K562 (cell line): ENCODE measurements at regions of chr18 and their contacts with region 1.

Region 1: DNA sequence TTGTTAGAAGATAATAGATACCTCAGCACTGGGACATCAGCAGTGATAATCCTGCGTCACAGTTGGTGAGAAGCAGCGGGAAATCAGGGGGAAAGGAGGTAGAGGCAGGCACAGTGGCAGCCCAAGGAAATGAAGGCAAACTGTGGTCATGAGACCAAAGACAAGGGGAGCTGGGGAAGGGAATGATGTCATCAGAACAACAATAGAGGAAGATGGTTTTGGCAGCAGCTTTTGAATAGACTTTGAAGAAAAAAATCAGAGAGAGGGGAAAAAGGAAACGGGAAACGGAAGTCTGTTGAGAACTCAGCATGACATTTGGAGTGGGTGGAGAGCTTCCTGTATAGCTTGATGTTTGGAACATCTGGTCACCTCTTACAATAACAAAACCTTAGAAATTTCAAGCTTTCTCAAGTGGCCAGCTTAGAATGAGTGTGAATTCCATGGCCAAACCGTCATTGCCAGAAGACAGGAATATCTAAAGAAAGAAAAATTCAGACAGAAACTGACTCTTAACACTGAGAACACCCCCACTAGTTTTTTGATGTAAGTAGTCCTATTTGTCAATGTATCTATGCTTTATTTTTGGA is 18.4 kb upstream of the YES1 start:
- DNase-seq: peak; percentile 32 to 84 (median 46)
- ATAC-seq: peak; percentile 57
- H3K4me3 ChIP-seq: peak overlapping the region; percentile 41; the same call in 1 of the 2 replicates
- H3K27ac ChIP-seq: peak overlapping the region; percentile 75
- H3K4me1 ChIP-seq: peaks cover 21 to 39% of the 10 kb centered on the region in 2 experiments; a peak in 4 of 5 replicates
- H3K27me3 ChIP-seq: no peaks in the 10 kb centered on the region
- CTCF ChIP-seq: no peak
- EP300 ChIP-seq: peak; percentile 71; the same call in 1 of the 2 replicates
- POLR2A ChIP-seq: peak; percentile 51; the same call in 1 of the 2 replicates
- RAD21 ChIP-seq: no peak

Region 2: GRCh38 chr18:623761-624620 is 206.4 kb before region 1 on chr18:
- CTCF ChIA-PET with region 1: interaction called, 17 read pairs
- POLR2A ChIA-PET with region 1: interaction called, 3 read pairs
- in situ Hi-C with region 1: loop called (anchors 5 kb)
- intact Hi-C with region 1: loop called (anchors 1 kb)
- DNase-seq: peak; percentile 61 to 85 (median 64)
- ATAC-seq: peak; percentile 95
- H3K4me3 ChIP-seq: no peak overlapping the region
- H3K27ac ChIP-seq: no peak overlapping the region
- H3K4me1 ChIP-seq: peaks cover 3 to 4% of the 10 kb centered on the region in 2 experiments; a peak in 3 of 5 replicates
- H3K27me3 ChIP-seq: peaks cover 0 to 5% of the 10 kb centered on the region in 2 experiments; a peak in 2 of 5 replicates
- CTCF ChIP-seq: peak; percentile 78 to 85 (median 82)
- EP300 ChIP-seq: no peak
- POLR2A ChIP-seq: no peak
- RAD21 ChIP-seq: peak; percentile 70 to 81

Region 3: GRCh38 chr18:658001-658946 is 172.1 kb before region 1 on chr18:
- CTCF ChIA-PET with region 1: no interaction called
- POLR2A ChIA-PET with region 1: interaction called, 11 read pairs
- in situ Hi-C with region 1: no loop called
- intact Hi-C with region 1: no loop called
- DNase-seq: peak; percentile 83 to 98 (median 87)
- ATAC-seq: peak; percentile 89
- H3K4me3 ChIP-seq: peak overlapping the region; percentile 93
- H3K27ac ChIP-seq: peak overlapping the region; percentile 96
- H3K4me1 ChIP-seq: peaks cover 19 to 27% of the 10 kb centered on the region in 2 experiments; a peak in 4 of 5 replicates
- H3K27me3 ChIP-seq: no peaks in the 10 kb centered on the region
- CTCF ChIP-seq: no peak
- EP300 ChIP-seq: 0 out of 2 replicates have a peak, but pooled peaks have one; percentile 5
- POLR2A ChIP-seq: peak; percentile 95
- RAD21 ChIP-seq: no peak

Region 4: GRCh38 chr18:677951-678381 is 152.4 kb before region 1 on chr18:
- CTCF ChIA-PET with region 1: no interaction called
- POLR2A ChIA-PET with region 1: interaction called, 5 read pairs
- in situ Hi-C with region 1: no loop called
- intact Hi-C with region 1: loop called (anchors 5 kb)
- DNase-seq: peak in 1 of 4 experiments; percentile 27
- ATAC-seq: no peak
- H3K4me3 ChIP-seq: no peak overlapping the region
- H3K27ac ChIP-seq: no peak overlapping the region
- H3K4me1 ChIP-seq: peaks cover 0 to 7% of the 10 kb centered on the region in 2 experiments; a peak in 3 of 5 replicates
- H3K27me3 ChIP-seq: no peaks in the 10 kb centered on the region
- CTCF ChIP-seq: no peak
- EP300 ChIP-seq: no peak
- POLR2A ChIP-seq: 0 out of 2 replicates have a peak, but pooled peaks have one; percentile 36
- RAD21 ChIP-seq: no peak

Region 5: GRCh38 chr18:712401-713134 is 117.8 kb before region 1 on chr18 and contains the start of gene ENOSF1:
- CTCF ChIA-PET with region 1: no interaction called
- POLR2A ChIA-PET with region 1: interaction called, 3 read pairs
- in situ Hi-C with region 1: no loop called
- intact Hi-C with region 1: loop called (anchors 1 kb)
- DNase-seq: peak; percentile 91 to 95 (median 94)
- ATAC-seq: peak; percentile 96
- H3K4me3 ChIP-seq: peak within 1 kb of the TSS; percentile 63
- H3K27ac ChIP-seq: peak within 1 kb of the TSS; percentile 88
- H3K4me1 ChIP-seq: peaks cover 7 to 10% of the 10 kb centered on the region in 2 experiments; a peak in 3 of 5 replicates
- H3K27me3 ChIP-seq: no peaks in the 10 kb centered on the region
- CTCF ChIP-seq: peak; percentile 79 to 89 (median 83)
- EP300 ChIP-seq: no peak
- POLR2A ChIP-seq: peak; percentile 43; the same call in 1 of the 2 replicates
- RAD21 ChIP-seq: peak; percentile 23 to 56; a peak in 2 of 4 replicates
- polyA plus RNA-seq, gene ENOSF1: 15.5 to 20.0 TPM

Region 6: DNA sequence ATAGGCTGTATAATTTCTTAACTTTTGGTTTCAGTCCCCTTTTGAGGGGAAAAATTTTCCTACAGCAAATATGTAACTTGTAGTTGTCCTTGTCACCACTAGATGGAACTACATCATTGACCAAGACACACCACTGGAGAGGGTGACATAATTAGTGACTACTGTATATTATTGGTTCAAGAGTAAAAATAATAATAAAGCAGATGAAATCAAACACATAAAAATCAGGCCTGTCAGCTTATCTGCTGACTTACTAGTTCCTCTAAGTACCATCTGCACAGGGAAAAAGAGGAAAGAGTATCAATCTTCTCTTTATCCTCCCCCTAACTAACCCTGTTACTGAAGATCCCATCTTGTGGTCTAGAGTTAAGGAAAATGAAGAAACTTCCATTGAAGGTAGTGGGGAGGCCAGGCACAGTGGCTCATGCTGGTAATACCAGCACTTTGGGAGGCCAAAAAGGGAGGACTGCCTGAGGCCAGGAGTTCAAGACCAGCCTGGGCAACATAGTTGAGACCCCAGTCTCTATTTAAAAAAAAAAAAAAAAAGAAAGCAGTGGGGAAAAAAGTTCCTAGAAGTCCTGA is 88.4 kb before region 1 on chr18:
- CTCF ChIA-PET with region 1: interaction called, 61 read pairs
- POLR2A ChIA-PET with region 1: interaction called, 6 read pairs
- in situ Hi-C with region 1: loop called (anchors 5 kb)
- intact Hi-C with region 1: loop called (anchors 1 kb)
- DNase-seq: peak; percentile 58 to 69 (median 66)
- ATAC-seq: peak; percentile 90
- H3K4me3 ChIP-seq: no peak overlapping the region
- H3K27ac ChIP-seq: no peak overlapping the region
- H3K4me1 ChIP-seq: no peaks in the 10 kb centered on the region
- H3K27me3 ChIP-seq: no peaks in the 10 kb centered on the region
- CTCF ChIP-seq: peak; percentile 69 to 92 (median 70); a peak in 5 of 6 replicates
- EP300 ChIP-seq: no peak
- POLR2A ChIP-seq: no peak
- RAD21 ChIP-seq: peak; percentile 96 to 97

Region 7: GRCh38 chr18:812376-813171 is 17.8 kb before region 1 on chr18:
- CTCF ChIA-PET with region 1: no interaction called
- POLR2A ChIA-PET with region 1: interaction called, 37 read pairs
- in situ Hi-C with region 1: no loop called
- intact Hi-C with region 1: loop called (anchors 1 kb)
- DNase-seq: peak; percentile 94 to 97 (median 96)
- ATAC-seq: peak; percentile 80
- H3K4me3 ChIP-seq: peak overlapping the region; percentile 90
- H3K27ac ChIP-seq: peak overlapping the region; percentile 97
- H3K4me1 ChIP-seq: peaks cover 32 to 41% of the 10 kb centered on the region in 2 experiments
- H3K27me3 ChIP-seq: no peaks in the 10 kb centered on the region
- CTCF ChIP-seq: no peak
- EP300 ChIP-seq: peak; percentile 55
- POLR2A ChIP-seq: peak; percentile 98
- RAD21 ChIP-seq: peak; percentile 14 to 27; a peak in 2 of 4 replicates